ENCODE measurements at regions of chr1 and their contacts with region 1.

Region 1: GRCh38 chr1:26787706-26788514 is at the start of gene PIGV:
- DNase-seq: peak; percentile 86
- H3K4me3 Mint-ChIP-seq: peak within 1 kb of the TSS; percentile 98
- H3K27ac Mint-ChIP-seq: peak within 1 kb of the TSS; percentile 100
- H3K4me1 Mint-ChIP-seq: peaks cover 61% of the 10 kb centered on the region
- H3K27me3 Mint-ChIP-seq: no peaks in the 10 kb centered on the region
- total RNA-seq, gene PIGV: 19.4 and 20.1 TPM in 2 replicates

Region 2: DNA sequence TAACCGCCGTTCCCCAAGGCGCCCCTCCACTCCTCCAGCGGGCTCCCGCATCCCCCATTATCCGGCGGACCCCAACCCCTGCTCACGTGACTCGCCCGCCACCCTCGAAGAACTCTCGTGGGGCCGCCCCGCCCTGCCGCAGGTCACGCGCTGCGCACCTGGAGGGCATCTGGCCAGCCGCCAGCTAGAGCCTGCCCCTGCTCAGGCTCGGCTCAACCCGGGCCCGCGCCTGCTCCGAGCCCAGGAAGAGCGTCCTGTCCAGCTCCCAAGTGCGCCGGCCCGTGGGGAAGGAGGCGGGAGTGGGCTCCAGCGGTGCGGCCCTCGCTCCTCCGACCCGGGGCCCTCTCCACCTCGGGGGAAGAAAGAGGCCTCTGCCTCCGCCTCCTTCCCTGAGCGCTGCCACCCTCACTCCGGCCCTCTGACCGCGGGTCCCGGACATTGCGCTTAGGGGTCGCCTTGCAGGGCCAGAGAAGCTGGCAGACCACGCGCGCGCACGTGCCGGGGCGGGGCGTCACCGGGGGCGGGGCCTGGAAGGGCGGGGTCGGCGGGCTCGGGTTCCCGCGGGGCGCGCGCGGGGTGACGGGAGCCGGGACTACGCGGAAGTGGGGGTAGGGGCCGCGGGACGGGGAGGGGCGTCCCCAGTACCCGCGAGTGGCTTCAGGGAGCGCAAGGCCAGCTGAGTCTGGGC is 287.3 kb before region 1 on chr1:
- intact Hi-C with region 1: loop called (anchors 2 kb)
- DNase-seq: peak; percentile 85
- H3K4me3 Mint-ChIP-seq: peak overlapping the region; percentile 87
- H3K27ac Mint-ChIP-seq: peak overlapping the region; percentile 89
- H3K4me1 Mint-ChIP-seq: peaks cover 21% of the 10 kb centered on the region
- H3K27me3 Mint-ChIP-seq: no peaks in the 10 kb centered on the region

Region 3: DNA sequence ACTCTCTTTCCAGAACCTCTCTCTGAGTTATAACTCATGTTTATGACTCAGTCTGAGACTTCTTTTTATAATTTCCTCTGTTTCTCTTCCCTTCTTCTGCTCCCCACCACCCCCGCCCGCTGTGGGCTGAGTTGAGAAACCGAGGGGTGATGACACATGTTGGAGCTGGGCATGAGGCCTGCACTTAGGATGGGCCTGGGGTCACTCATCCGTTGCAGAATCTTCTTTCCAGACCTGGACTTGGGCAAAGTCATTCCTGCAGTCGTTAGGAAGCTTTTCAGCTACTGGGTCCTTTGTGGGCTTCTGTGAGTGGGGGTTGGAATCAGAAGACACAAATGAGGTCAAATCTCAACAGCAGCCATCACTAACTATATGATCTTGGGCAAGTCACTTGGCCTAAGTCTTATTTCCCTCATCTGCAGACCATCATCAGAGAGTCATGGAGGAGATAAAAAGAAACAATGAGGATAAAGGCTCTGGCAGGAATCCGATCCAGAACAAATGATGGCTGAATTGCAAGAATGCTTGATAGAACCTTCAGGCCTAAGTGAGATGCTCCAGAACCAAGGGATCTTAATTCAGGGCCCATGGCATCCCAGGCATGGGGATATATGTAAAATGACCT is 205.0 kb before region 1 on chr1:
- intact Hi-C with region 1: loop called (anchors 1 kb)
- DNase-seq: peak; percentile 22
- H3K4me3 Mint-ChIP-seq: peak overlapping the region; percentile 31
- H3K27ac Mint-ChIP-seq: peak overlapping the region; percentile 94
- H3K4me1 Mint-ChIP-seq: peaks cover 45% of the 10 kb centered on the region
- H3K27me3 Mint-ChIP-seq: no peaks in the 10 kb centered on the region

Region 4: GRCh38 chr1:26695356-26696118 is 92.4 kb before region 1 on chr1 and contains the start of gene ARID1A:
- intact Hi-C with region 1: loop called (anchors 1 kb)
- DNase-seq: peak; percentile 97
- H3K4me3 Mint-ChIP-seq: peak within 1 kb of the TSS; percentile 88
- H3K27ac Mint-ChIP-seq: peak within 1 kb of the TSS; percentile 98
- H3K4me1 Mint-ChIP-seq: peaks cover 27% of the 10 kb centered on the region
- H3K27me3 Mint-ChIP-seq: no peaks in the 10 kb centered on the region
- total RNA-seq, gene ARID1A: 109 TPM in 2 replicates

Region 5: DNA sequence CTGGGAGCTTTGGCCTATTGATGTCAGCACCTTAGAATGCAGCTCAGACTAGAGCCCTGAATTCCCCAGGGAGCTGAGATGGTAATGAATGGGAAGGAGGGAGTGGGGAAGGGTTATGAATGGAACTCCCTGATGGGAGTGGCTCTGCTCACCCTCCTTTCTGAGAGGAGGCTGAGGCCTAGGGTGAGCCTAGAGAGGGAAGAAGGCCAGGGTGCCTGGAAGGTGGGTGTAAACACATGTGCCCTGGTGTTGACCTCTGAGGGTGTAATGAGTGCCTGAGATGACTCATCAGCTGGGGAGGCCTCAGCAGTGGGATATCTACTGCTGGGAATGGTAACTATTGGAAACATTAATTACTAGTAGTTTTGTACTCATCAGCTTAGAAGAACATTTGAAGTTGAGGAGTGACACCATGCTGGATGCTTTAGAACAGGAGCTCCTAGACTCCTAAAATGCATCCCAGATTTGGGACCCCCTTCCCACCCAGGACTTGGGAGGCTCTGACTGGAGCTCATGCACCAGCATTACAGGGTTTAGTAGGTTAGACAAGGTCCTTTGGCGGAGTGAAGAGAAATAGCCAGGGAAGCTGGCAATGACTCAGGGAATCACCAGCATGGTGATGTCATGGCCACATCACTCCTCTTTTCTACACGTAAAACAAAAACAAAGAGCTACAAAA is 16.1 kb before region 1 on chr1:
- intact Hi-C with region 1: loop called (anchors 2 kb)
- DNase-seq: no peak
- H3K4me3 Mint-ChIP-seq: no peak overlapping the region
- H3K27ac Mint-ChIP-seq: peak overlapping the region; percentile 61
- H3K4me1 Mint-ChIP-seq: peaks cover 32% of the 10 kb centered on the region
- H3K27me3 Mint-ChIP-seq: no peaks in the 10 kb centered on the region

Region 6: GRCh38 chr1:26864610-26865527 is 77.0 kb after region 1 on chr1:
- intact Hi-C with region 1: loop called (anchors 1 kb)
- DNase-seq: peak; percentile 95
- H3K4me3 Mint-ChIP-seq: peak overlapping the region; percentile 93
- H3K27ac Mint-ChIP-seq: peak overlapping the region; percentile 90
- H3K4me1 Mint-ChIP-seq: peaks cover 20% of the 10 kb centered on the region
- H3K27me3 Mint-ChIP-seq: no peaks in the 10 kb centered on the region